ENCODE measurements at regions of chr20 and their contacts with region 1.

Region 1: DNA sequence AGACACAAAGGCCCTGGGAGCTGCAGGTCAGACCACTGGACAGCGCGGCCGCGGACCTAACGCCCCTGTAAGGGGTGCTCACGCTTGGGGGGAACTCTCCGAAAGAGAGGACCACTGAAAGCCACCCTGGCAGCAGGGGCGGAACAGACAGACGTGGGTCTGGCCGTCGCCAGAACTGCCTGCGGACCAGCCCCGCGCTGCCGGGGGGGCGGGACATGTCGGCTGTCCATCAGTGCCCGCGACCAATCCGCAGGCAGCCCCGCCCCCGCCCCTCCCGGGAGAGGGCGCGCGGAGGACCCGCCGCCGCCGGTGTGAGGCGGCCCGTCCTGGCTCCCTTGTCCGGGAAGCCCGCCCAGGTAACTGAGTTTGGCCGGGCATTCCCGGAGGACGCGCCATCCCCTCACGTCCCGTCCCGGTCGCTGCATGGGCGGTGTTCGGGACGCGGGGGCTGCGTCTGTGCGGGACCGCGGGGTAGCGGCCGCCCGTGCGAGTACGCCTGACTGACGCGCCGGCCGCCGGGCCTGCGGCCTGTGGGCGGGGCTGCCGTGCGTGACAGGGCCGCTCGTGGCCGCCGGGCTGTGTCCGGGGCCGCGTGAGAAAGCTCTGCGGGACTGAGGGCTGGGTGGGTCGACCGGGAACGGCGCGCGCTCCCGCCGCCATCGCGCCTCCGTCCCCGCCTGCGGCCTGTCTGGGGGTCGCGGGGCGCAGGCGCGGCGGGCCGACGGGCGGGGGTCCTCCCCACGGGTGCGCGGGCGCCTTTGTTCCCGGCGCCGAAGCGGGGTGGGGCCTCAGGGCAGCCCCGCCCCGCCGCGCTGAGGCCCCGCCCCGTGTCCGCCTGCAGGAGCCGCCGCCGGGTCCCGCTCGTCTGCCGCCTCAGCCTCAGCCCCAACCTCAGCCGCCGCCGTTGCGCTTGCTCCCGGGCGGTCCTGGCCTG is at the start of gene PLCG1:
- DNase-seq: peak; percentile 89
- H3K4me3 Mint-ChIP-seq: peak within 1 kb of the TSS; percentile 94
- H3K27ac Mint-ChIP-seq: peak within 1 kb of the TSS; percentile 92
- H3K4me1 Mint-ChIP-seq: peaks cover 64% of the 10 kb centered on the region
- H3K27me3 Mint-ChIP-seq: no peaks in the 10 kb centered on the region
- total RNA-seq, gene PLCG1: 133 to 139 TPM

Region 2: GRCh38 chr20:40990542-40991120 is 146.3 kb before region 1 on chr20:
- CTCF ChIA-PET with region 1: interaction called, 11 read pairs
- POLR2A ChIA-PET with region 1: no interaction called
- intact Hi-C with region 1: no loop called
- DNase-seq: peak; percentile 86
- H3K4me3 Mint-ChIP-seq: no peak overlapping the region
- H3K27ac Mint-ChIP-seq: peak overlapping the region; percentile 24
- H3K4me1 Mint-ChIP-seq: peaks cover 26% of the 10 kb centered on the region
- H3K27me3 Mint-ChIP-seq: no peaks in the 10 kb centered on the region

Region 3: GRCh38 chr20:41119546-41120235 is 17.3 kb before region 1 on chr20:
- CTCF ChIA-PET with region 1: interaction called, 28 read pairs
- POLR2A ChIA-PET with region 1: no interaction called
- intact Hi-C with region 1: no loop called
- DNase-seq: no peak
- H3K4me3 Mint-ChIP-seq: no peak overlapping the region
- H3K27ac Mint-ChIP-seq: no peak overlapping the region
- H3K4me1 Mint-ChIP-seq: peaks cover 15% of the 10 kb centered on the region
- H3K27me3 Mint-ChIP-seq: no peaks in the 10 kb centered on the region

Region 4: GRCh38 chr20:41161886-41162285 is 24.9 kb after region 1 on chr20:
- CTCF ChIA-PET with region 1: interaction called, 73 read pairs
- POLR2A ChIA-PET with region 1: interaction called, 85 read pairs
- intact Hi-C with region 1: loop called (anchors 1 kb)
- DNase-seq: no peak
- H3K4me3 Mint-ChIP-seq: no peak overlapping the region
- H3K27ac Mint-ChIP-seq: peak overlapping the region; percentile 84
- H3K4me1 Mint-ChIP-seq: peaks cover 61% of the 10 kb centered on the region
- H3K27me3 Mint-ChIP-seq: no peaks in the 10 kb centered on the region

Region 5: GRCh38 chr20:41232973-41233926 is 96.3 kb after region 1 on chr20:
- CTCF ChIA-PET with region 1: interaction called, 69 read pairs
- POLR2A ChIA-PET with region 1: no interaction called
- intact Hi-C with region 1: loop called (anchors 1 kb)
- DNase-seq: no peak
- H3K4me3 Mint-ChIP-seq: no peak overlapping the region
- H3K27ac Mint-ChIP-seq: no peak overlapping the region
- H3K4me1 Mint-ChIP-seq: peaks cover 20% of the 10 kb centered on the region
- H3K27me3 Mint-ChIP-seq: no peaks in the 10 kb centered on the region

Region 6: GRCh38 chr20:41339507-41340326 is 202.8 kb after region 1 on chr20:
- CTCF ChIA-PET with region 1: interaction called, 95 read pairs
- POLR2A ChIA-PET with region 1: no interaction called
- intact Hi-C with region 1: loop called (anchors 1 kb)
- DNase-seq: peak; percentile 90
- H3K4me3 Mint-ChIP-seq: peak overlapping the region; percentile 63
- H3K27ac Mint-ChIP-seq: no peak overlapping the region
- H3K4me1 Mint-ChIP-seq: peaks cover 5% of the 10 kb centered on the region
- H3K27me3 Mint-ChIP-seq: peaks cover 7% of the 10 kb centered on the region